ENCODE measurements at regions of chr7 and their contacts with region 1.

Region 1: DNA sequence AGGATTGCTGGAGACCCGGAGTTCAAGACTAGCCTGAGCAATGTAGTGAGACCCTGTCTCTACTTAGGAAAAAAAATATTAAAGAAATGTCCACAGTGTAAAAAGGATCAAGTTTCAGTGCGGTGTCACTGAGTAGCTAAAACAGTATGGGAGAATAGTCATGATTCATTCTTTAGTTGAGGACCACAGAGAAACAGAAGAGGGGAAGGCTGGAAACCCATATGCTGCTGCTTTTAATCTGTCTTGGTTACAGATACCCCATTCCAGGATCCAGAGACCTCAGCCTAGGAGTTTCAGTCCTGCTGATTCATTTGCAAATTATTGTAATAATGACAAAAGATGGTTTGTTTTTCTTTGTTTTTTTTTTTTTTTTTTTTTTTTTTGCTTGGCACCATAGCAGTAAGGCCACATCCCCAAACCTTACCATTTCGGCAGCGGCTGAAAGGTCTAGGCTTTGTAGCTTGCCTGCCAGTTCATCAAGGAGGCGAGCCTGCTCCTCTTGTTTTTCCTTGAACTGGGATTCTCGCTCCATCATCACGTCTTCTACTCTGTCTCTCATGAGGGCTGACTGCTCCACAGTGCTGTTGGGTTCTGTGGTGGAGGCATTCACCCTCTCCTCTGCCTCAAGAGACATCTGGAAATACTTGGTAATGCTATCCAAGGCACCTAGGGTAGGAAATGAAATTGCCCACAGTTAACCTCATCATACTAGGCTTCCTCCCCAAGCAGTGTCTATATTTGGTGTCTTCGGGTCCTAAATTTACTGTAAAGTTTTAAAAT is 44.2 kb downstream of the DLD start:
- DNase-seq: no peak
- H3K4me3 ChIP-seq: 0 out of 8 replicates have a peak overlapping the region, but pooled peaks of 2 of the 4 experiments have one; percentile 0 to 2
- H3K27ac ChIP-seq: 0 out of 2 replicates have a peak overlapping the region, but pooled peaks have one; percentile 30
- H3K4me1 ChIP-seq: peaks cover 7 to 41% (median 21%) of the 10 kb centered on the region in 4 experiments
- H3K27me3 ChIP-seq: no peaks in the 10 kb centered on the region; a peak in 1 of 7 replicates
- CTCF ChIP-seq: no peak
- EP300 ChIP-seq: no peak
- POLR2A ChIP-seq: no peak
- RAD21 ChIP-seq: no peak

Region 2: DNA sequence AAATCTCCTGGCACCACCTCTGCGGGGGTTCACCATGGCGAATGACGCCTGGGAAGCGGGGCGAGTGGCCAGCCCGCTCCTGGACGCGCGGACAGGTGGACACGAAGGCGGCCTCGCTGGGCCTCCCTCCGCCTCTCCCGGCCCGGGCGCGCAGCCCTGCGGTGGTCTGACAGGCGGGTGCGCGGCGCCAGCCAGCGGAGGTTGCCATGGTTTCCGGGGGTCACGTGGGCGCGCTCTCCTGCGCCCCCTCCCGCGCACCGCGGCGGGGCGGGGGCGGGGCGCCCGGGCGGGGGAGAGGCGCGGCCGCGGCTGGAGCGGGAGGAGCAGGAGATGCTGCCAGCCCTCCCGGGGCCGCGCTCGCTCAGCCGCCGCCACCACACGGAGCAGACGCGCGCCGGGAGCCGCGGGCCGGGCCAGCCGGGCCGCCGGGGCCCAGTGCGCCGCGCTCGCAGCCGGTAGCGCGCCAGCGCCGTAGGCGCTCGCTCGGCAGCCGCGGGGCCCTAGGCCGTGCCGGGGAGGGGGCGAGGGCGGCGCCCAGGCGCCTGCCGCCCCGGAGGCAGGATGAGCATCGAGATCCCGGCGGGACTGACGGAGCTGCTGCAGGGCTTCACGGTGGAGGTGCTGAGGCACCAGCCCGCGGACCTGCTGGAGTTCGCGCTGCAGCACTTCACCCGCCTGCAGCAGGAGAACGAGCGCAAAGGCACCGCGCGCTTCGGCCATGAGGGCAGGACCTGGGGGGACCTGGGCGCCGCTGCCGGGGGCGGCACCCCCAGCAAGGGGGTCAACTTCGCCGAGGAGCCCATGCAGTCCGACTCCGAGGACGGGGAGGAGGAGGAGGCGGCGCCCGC is 890.6 kb before region 1 on chr7 and contains the start of gene PRKAR2B:
- CTCF ChIA-PET with region 1: no interaction called
- POLR2A ChIA-PET with region 1: no interaction called
- DNase-seq: peak; percentile 44 to 87
- H3K4me3 ChIP-seq: peak within 1 kb of the TSS; percentile 61 to 80 (median 70)
- H3K27ac ChIP-seq: no peak within 1 kb of the TSS
- H3K4me1 ChIP-seq: peaks cover 2 to 6% (median 4%) of the 10 kb centered on the region in 4 experiments; a peak in 4 of 7 replicates
- H3K27me3 ChIP-seq: no peaks in the 10 kb centered on the region
- CTCF ChIP-seq: no peak
- EP300 ChIP-seq: no peak
- POLR2A ChIP-seq: no peak
- RAD21 ChIP-seq: no peak
- total RNA-seq, gene PRKAR2B: 35.1 and 37.0 TPM in 2 replicates

Region 3: GRCh38 chr7:107953924-107954303 is 18.7 kb after region 1 on chr7:
- CTCF ChIA-PET with region 1: interaction called, 4 read pairs
- POLR2A ChIA-PET with region 1: interaction called, 36 read pairs
- DNase-seq: no peak
- H3K4me3 ChIP-seq: no peak overlapping the region
- H3K27ac ChIP-seq: no peak overlapping the region
- H3K4me1 ChIP-seq: peaks cover 3 to 18% (median 11%) of the 10 kb centered on the region in 4 experiments; a peak in 6 of 7 replicates
- H3K27me3 ChIP-seq: no peaks in the 10 kb centered on the region
- CTCF ChIP-seq: no peak
- EP300 ChIP-seq: no peak
- POLR2A ChIP-seq: no peak
- RAD21 ChIP-seq: no peak

Region 4: GRCh38 chr7:108002726-108003598 is 67.8 kb after region 1 on chr7 and contains the start of gene LAMB1:
- CTCF ChIA-PET with region 1: interaction called, 7 read pairs
- POLR2A ChIA-PET with region 1: interaction called, 18 read pairs
- DNase-seq: peak in 1 of 2 experiments; percentile 87
- H3K4me3 ChIP-seq: peak within 1 kb of the TSS; percentile 40 to 92 (median 69)
- H3K27ac ChIP-seq: no peak within 1 kb of the TSS
- H3K4me1 ChIP-seq: peaks cover 7 to 21% (median 11%) of the 10 kb centered on the region in 4 experiments
- H3K27me3 ChIP-seq: peaks cover 34 to 75% (median 65%) of the 10 kb centered on the region in 4 experiments
- CTCF ChIP-seq: no peak
- EP300 ChIP-seq: no peak
- POLR2A ChIP-seq: no peak
- RAD21 ChIP-seq: no peak
- total RNA-seq, gene LAMB1: 37.2 and 38.5 TPM in 2 replicates